Left colon (tissue), 2 donors: ENCODE measurements at regions of chr2 and their contacts with region 1.

Region 1: DNA sequence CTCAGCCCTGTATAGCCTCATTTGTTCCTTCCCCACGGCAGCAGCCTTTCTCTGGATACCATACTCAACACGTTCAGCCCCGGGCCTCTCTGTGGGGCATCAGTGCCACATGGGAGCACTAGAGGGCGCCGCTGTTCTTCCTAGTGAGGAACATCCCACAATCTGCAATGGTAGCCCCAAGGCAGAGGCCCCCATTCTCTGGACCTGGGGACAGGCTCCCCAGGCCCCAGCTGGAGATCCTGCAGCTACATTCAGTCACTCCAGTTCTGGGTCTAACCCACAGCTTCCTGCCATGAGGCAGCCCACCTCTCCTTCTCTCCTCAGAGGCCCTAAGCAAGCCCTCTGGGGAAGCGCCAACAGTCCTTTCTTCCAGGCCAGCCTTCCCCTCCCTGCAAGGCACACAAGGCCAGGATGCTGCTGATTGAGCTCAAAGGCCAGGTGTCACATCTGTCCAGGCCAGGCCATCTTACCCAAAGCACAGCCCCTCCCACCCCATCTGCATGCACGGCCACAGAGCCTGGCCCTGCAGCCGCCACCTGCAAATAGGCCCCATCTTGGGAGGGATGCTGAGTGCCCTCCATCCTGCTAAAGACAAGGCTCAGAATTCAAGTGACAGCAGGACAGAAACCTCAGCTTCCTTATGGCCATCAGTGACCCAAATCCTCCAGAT is 14.3 kb upstream of the SFXN5 start:
- DNase-seq: peak; percentile 75 to 92
- ATAC-seq: peak; percentile 84

Region 2: GRCh38 chr2:73156539-73157124 is 70.8 kb after region 1 on chr2:
- intact Hi-C with region 1: loop called in 1 of 2 experiments (anchors 10 kb)
- DNase-seq: peak in 1 of 2 donors; percentile 63
- ATAC-seq: peak; percentile 83

Region 3: GRCh38 chr2:73337828-73338227 is 252.0 kb after region 1 on chr2:
- intact Hi-C with region 1: no loop called
- DNase-seq: no peak
- ATAC-seq: no peak